Mammary epithelial cell (primary cell): ENCODE measurements at regions of chr4 and their contacts with region 1.

Region 1: DNA sequence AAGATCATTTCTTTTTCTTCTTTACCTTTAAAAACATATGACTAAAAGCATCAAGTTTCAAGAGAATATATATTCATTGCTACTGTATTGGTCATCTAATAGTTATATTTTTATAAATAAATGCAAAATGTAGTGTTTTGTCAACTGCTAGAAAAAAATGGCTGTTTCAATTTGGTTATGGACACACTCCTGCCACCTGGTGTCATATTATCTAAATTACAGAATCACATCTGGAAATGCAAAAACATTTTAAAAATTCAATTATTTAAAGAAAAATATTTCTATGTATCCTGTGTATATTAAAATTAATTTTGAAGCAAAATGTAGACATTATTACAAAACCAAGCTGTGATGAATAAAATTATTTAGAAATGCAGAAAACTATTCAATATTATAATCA is 329.4 kb upstream of the PCDH18 start:
- DNase-seq: no peak
- H3K4me3 ChIP-seq: no peak overlapping the region
- H3K27ac ChIP-seq: no peak overlapping the region
- H3K4me1 ChIP-seq: no peaks in the 10 kb centered on the region
- H3K27me3 ChIP-seq: no peaks in the 10 kb centered on the region
- CTCF ChIP-seq: peak; percentile 45

Region 2: GRCh38 chr4:137124278-137124932 is 737.3 kb before region 1 on chr4:
- CTCF ChIA-PET with region 1: no interaction called
- dilution Hi-C with region 1: no loop called
- in situ Hi-C with region 1: no loop called
- intact Hi-C with region 1: loop called (anchors 10 kb)
- DNase-seq: peak; percentile 53
- H3K4me3 ChIP-seq: peak overlapping the region; percentile 38 to 88 (median 62)
- H3K27ac ChIP-seq: no peak overlapping the region
- H3K4me1 ChIP-seq: peaks cover 4% of the 10 kb centered on the region
- H3K27me3 ChIP-seq: no peaks in the 10 kb centered on the region
- CTCF ChIP-seq: peak; percentile 60 to 71

Region 3: DNA sequence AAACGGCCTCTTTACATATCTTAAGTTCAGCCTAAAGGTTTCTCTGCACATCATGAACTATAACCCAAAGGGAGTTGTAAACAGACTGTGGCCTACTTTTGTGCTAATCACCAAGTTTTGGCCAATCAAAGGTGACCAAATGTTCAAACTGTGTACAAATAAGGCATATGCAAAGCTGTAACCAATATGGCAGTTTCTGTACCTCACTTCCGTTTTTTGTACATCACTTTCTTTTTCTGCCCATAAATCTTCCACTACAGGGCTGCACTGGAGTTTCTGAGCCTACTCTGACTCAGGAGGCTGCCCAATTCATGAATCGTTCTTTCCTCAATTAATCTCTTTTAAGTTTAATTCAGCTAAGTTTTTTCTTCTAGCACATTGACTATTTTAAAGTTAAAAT is 61.8 kb after region 1 on chr4:
- CTCF ChIA-PET with region 1: no interaction called
- dilution Hi-C with region 1: no loop called
- in situ Hi-C with region 1: no loop called
- intact Hi-C with region 1: no loop called
- DNase-seq: no peak
- H3K4me3 ChIP-seq: no peak overlapping the region
- H3K27ac ChIP-seq: no peak overlapping the region
- H3K4me1 ChIP-seq: no peaks in the 10 kb centered on the region
- H3K27me3 ChIP-seq: no peaks in the 10 kb centered on the region
- CTCF ChIP-seq: no peak